ENCODE measurements at regions of chr3 and their contacts with region 1.

Region 1: DNA sequence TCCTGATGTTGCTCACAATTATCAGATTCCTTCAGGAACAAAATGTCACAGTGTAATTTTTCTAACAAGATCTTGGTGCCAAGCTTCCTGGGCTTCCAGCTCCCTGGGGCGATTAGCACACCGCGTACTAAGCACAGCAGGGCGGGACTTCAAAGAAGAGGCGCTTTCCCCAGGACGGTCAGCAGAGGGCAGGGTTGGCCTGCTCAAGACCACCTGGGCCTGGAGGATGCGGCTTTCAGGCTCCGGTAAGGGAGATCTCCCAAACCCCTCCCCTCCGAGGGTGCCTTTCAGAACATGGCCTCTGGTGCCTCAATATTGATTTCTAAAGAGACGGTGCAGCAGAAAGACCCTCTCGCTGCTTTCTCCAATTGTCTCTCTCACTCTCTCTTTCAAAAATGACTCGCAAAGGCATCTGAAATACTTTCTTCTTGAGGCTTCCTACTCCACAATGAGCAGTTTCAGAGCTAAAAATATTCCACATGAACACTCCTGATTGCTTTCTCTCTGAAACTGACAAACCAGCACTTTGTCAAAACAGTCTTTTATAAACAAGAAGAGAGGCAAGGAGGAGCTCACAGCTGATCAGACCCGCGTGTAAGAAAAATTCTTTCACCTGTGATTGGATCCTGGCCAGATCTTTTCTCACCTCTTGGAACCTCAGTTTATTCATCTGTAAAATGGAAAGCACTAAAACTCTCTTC is 154.0 kb downstream of the ADAMTS9 start:
- DNase-seq: peak; percentile 90 to 91
- H3K4me3 ChIP-seq: no peak overlapping the region
- H3K4me3 Mint-ChIP-seq: no peak overlapping the region
- H3K27ac Mint-ChIP-seq: no peak overlapping the region
- H3K4me1 ChIP-seq: peaks cover 16% of the 10 kb centered on the region
- H3K4me1 Mint-ChIP-seq: peaks cover 8% of the 10 kb centered on the region
- H3K27me3 ChIP-seq: no peaks in the 10 kb centered on the region
- H3K27me3 Mint-ChIP-seq: no peaks in the 10 kb centered on the region
- CTCF ChIP-seq: peak; percentile 86 to 89

Region 2: DNA sequence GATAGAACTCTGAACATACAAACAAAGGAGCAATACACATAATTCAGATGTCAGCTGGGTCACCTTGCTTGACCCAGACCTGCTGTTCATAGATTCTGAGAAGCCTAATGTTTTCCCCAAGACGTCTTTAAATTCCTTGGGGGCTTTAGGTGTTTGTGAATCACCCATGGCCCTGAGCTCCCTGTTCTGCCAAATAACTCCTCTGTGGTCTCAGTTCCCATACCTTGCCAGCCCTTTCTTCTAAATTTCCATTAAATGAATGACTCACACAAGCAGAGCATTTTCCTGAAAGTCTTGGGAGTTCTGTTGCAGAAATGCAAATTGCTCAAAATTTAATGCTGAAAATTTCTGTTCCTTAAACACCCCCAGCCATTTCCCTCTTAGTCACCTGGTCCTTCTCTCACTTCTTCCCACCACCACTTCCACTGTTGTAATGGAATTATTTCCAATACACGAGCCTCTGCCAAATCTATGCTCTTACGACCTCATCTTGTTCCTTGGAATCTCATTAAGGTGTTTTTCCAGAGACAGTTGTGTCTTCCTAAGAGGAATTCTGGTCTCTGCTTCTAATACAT is 477.1 kb before region 1 on chr3:
- CTCF ChIA-PET with region 1: no interaction called
- POLR2A ChIA-PET with region 1: no interaction called
- intact Hi-C with region 1: no loop called
- DNase-seq: no peak
- H3K4me3 ChIP-seq: no peak overlapping the region
- H3K4me3 Mint-ChIP-seq: no peak overlapping the region
- H3K27ac Mint-ChIP-seq: no peak overlapping the region
- H3K4me1 ChIP-seq: peaks cover 10% of the 10 kb centered on the region; the same call in 1 of the 2 replicates
- H3K4me1 Mint-ChIP-seq: peaks cover 6% of the 10 kb centered on the region
- H3K27me3 ChIP-seq: no peaks in the 10 kb centered on the region
- H3K27me3 Mint-ChIP-seq: no peaks in the 10 kb centered on the region
- CTCF ChIP-seq: no peak

Region 3: DNA sequence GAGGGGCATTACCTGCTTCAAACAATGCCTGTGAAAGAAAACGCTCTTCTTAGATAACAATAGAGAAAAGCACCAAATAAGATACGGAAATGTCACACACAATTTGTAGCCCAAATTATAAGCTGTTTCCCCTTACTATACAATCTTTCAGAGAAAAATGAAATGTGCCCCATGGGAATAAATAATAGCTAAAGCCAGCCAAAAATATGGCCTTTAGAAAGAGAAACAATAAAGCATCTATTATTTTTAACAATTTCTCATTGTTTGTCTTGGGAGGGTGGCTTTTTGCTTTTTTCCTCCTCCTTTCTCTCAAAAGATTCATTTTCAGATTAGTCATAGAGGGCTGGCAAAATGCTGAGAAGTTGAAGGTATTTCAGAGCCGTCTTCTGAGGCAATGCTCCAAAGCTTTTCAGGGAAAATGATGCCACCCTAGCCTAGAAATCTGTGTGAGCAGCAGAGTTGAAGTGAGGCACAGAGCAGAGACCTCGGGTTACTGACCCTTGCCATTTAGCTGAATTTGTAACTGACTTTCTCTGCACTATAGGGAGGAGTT is 222.3 kb before region 1 on chr3:
- CTCF ChIA-PET with region 1: no interaction called
- POLR2A ChIA-PET with region 1: no interaction called
- intact Hi-C with region 1: no loop called
- DNase-seq: no peak
- H3K4me3 ChIP-seq: no peak overlapping the region
- H3K4me3 Mint-ChIP-seq: no peak overlapping the region
- H3K27ac Mint-ChIP-seq: no peak overlapping the region
- H3K4me1 ChIP-seq: peaks cover 7% of the 10 kb centered on the region
- H3K4me1 Mint-ChIP-seq: peaks cover 4% of the 10 kb centered on the region
- H3K27me3 ChIP-seq: no peaks in the 10 kb centered on the region
- H3K27me3 Mint-ChIP-seq: no peaks in the 10 kb centered on the region
- CTCF ChIP-seq: no peak

Region 4: GRCh38 chr3:64327100-64327804 is 206.5 kb before region 1 on chr3:
- CTCF ChIA-PET with region 1: no interaction called
- POLR2A ChIA-PET with region 1: no interaction called
- intact Hi-C with region 1: no loop called
- DNase-seq: no peak
- H3K4me3 ChIP-seq: no peak overlapping the region
- H3K4me3 Mint-ChIP-seq: no peak overlapping the region
- H3K27ac Mint-ChIP-seq: no peak overlapping the region
- H3K4me1 ChIP-seq: 0 out of 2 replicates have a peak, but pooled peaks cover 3% of the 10 kb centered on the region
- H3K4me1 Mint-ChIP-seq: peaks cover 9% of the 10 kb centered on the region
- H3K27me3 ChIP-seq: no peaks in the 10 kb centered on the region
- H3K27me3 Mint-ChIP-seq: no peaks in the 10 kb centered on the region
- CTCF ChIP-seq: no peak

Region 5: DNA sequence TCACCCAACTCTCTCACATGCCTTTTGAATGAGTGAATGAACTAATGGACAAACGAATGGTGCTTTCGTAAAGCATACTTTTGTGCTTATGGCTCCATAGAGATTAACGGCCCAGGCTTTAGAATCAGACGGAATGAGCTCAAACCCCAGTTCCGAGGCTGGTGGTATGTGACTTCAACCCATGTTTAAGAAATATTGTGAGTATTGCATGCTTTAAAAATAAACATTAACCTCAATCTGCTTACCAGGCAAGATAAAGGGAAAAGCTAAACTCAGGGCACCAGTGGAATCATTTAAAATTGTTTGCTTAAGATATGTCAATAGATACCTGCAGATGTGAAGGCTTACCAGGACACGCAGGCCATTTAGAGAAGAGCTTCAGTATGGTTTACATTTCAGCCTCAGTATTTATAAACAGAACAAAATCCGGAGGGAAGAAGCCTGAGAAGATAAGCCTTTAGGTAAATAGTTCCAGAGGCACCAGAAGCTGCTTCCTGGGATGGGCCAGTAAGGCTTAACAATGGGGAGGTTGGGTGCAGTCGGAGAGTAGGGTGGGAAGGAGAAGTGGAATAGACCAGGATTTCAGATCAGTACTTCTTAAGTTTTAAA is 32.4 kb before region 1 on chr3:
- CTCF ChIA-PET with region 1: interaction called, 3 read pairs
- POLR2A ChIA-PET with region 1: no interaction called
- intact Hi-C with region 1: loop called (anchors 2 kb)
- DNase-seq: peak; percentile 67 to 71
- H3K4me3 ChIP-seq: no peak overlapping the region
- H3K4me3 Mint-ChIP-seq: peak overlapping the region; percentile 22
- H3K27ac Mint-ChIP-seq: no peak overlapping the region
- H3K4me1 ChIP-seq: peaks cover 24% of the 10 kb centered on the region
- H3K4me1 Mint-ChIP-seq: peaks cover 24% of the 10 kb centered on the region
- H3K27me3 ChIP-seq: no peaks in the 10 kb centered on the region
- H3K27me3 Mint-ChIP-seq: peaks cover 8% of the 10 kb centered on the region
- CTCF ChIP-seq: no peak

Region 6: GRCh38 chr3:64651741-64652241 is 118.0 kb after region 1 on chr3:
- CTCF ChIA-PET with region 1: interaction called, 6 read pairs
- POLR2A ChIA-PET with region 1: no interaction called
- intact Hi-C with region 1: loop called (anchors 5 kb)
- DNase-seq: no peak
- H3K4me3 ChIP-seq: no peak overlapping the region
- H3K4me3 Mint-ChIP-seq: no peak overlapping the region
- H3K27ac Mint-ChIP-seq: no peak overlapping the region
- H3K4me1 ChIP-seq: peaks cover 4% of the 10 kb centered on the region; the same call in 1 of the 2 replicates
- H3K4me1 Mint-ChIP-seq: peaks cover 13% of the 10 kb centered on the region
- H3K27me3 ChIP-seq: no peaks in the 10 kb centered on the region
- H3K27me3 Mint-ChIP-seq: no peaks in the 10 kb centered on the region
- CTCF ChIP-seq: no peak

Region 7: GRCh38 chr3:64763980-64764379 is 230.2 kb after region 1 on chr3:
- CTCF ChIA-PET with region 1: no interaction called
- POLR2A ChIA-PET with region 1: no interaction called
- intact Hi-C with region 1: loop called (anchors 1 kb)
- DNase-seq: peak in 1 of 2 experiments; percentile 4
- H3K4me3 ChIP-seq: no peak overlapping the region
- H3K4me3 Mint-ChIP-seq: no peak overlapping the region
- H3K27ac Mint-ChIP-seq: no peak overlapping the region
- H3K4me1 ChIP-seq: no peaks in the 10 kb centered on the region
- H3K4me1 Mint-ChIP-seq: no peaks in the 10 kb centered on the region
- H3K27me3 ChIP-seq: no peaks in the 10 kb centered on the region
- H3K27me3 Mint-ChIP-seq: no peaks in the 10 kb centered on the region
- CTCF ChIP-seq: no peak

Region 8: DNA sequence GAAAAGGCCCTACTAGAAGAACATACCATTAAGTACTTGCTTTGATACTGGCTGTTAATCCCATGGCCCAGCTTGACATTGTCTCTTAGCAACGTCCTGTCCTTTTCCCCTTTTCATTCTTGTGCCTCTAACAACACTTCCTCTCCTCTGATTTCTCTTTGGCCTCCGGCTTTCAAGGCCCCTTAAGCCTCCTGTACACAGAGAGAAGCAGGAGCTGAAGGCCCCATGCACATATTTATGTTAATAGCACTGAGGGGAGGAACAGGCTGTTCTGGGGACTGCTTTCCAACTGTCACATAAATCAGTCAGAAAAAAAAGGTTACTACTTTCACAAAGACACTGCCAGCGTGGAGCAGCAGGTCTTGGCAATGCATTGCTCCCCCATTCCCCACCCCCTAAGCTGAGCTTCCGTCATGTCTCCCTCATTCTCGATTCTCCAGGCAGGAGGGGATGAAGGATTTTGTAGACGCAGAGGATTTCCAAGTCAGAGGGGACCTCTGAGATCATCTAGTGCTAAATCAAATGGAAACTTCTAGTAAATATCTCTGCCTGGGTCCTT is 411.5 kb after region 1 on chr3:
- CTCF ChIA-PET with region 1: interaction called, 8 read pairs
- POLR2A ChIA-PET with region 1: no interaction called
- intact Hi-C with region 1: loop called (anchors 10 kb)
- DNase-seq: peak; percentile 84 to 87
- H3K4me3 ChIP-seq: no peak overlapping the region
- H3K4me3 Mint-ChIP-seq: peak overlapping the region; percentile 25
- H3K27ac Mint-ChIP-seq: peak overlapping the region; percentile 10
- H3K4me1 ChIP-seq: peaks cover 25% of the 10 kb centered on the region
- H3K4me1 Mint-ChIP-seq: peaks cover 13% of the 10 kb centered on the region
- H3K27me3 ChIP-seq: no peaks in the 10 kb centered on the region
- H3K27me3 Mint-ChIP-seq: no peaks in the 10 kb centered on the region
- CTCF ChIP-seq: no peak

Region 9: DNA sequence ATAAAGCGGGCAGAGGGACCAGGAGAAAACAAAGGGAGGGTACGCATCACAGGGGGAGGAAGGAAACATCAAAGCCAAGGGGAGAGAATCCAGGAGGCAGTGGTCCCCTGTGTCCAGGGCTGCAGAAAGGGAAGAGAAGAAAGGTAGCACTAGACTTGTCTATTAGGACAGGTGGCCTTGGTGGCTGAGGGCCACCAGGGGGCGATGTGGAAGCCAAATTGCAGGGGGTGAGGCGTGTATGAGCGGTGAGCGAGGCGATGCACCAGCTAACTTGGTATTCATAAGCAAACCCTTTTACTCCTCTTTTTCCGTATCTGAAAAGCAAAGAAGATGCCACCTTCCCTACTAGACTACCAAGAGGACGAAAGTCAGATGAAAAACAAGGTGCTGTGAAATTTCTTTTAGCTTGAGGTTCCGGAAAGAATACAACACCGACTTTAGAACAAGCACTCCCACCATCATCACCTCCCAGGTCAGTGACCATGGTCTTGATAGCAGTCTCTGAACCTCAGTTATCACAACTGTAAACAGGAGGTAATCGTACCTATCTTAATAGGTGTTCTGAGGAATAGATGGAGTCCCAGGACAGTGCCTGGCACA is 808.4 kb after region 1 on chr3:
- CTCF ChIA-PET with region 1: no interaction called
- POLR2A ChIA-PET with region 1: no interaction called
- intact Hi-C with region 1: loop called (anchors 5 kb)
- DNase-seq: peak; percentile 65 to 73
- H3K4me3 ChIP-seq: no peak overlapping the region
- H3K4me3 Mint-ChIP-seq: no peak overlapping the region
- H3K27ac Mint-ChIP-seq: no peak overlapping the region
- H3K4me1 ChIP-seq: no peaks in the 10 kb centered on the region
- H3K4me1 Mint-ChIP-seq: peaks cover 7% of the 10 kb centered on the region
- H3K27me3 ChIP-seq: no peaks in the 10 kb centered on the region
- H3K27me3 Mint-ChIP-seq: no peaks in the 10 kb centered on the region
- CTCF ChIP-seq: peak; percentile 64 to 73

Measured in Caco-2 (cell line).